PC-9 (cell line): ENCODE measurements at regions of chr9 and their contacts with region 1.

Region 1: GRCh38 chr9:33374634-33375213 is 27.6 kb downstream of the AQP7 start:
- DNase-seq: peak; percentile 61 to 63
- H3K4me3 ChIP-seq: no peak overlapping the region
- H3K27ac ChIP-seq: no peak overlapping the region
- H3K4me1 ChIP-seq: peaks cover 6% of the 10 kb centered on the region; the same call in 1 of the 2 replicates
- H3K27me3 ChIP-seq: no peaks in the 10 kb centered on the region
- CTCF ChIP-seq: peak; percentile 79

Region 2: DNA sequence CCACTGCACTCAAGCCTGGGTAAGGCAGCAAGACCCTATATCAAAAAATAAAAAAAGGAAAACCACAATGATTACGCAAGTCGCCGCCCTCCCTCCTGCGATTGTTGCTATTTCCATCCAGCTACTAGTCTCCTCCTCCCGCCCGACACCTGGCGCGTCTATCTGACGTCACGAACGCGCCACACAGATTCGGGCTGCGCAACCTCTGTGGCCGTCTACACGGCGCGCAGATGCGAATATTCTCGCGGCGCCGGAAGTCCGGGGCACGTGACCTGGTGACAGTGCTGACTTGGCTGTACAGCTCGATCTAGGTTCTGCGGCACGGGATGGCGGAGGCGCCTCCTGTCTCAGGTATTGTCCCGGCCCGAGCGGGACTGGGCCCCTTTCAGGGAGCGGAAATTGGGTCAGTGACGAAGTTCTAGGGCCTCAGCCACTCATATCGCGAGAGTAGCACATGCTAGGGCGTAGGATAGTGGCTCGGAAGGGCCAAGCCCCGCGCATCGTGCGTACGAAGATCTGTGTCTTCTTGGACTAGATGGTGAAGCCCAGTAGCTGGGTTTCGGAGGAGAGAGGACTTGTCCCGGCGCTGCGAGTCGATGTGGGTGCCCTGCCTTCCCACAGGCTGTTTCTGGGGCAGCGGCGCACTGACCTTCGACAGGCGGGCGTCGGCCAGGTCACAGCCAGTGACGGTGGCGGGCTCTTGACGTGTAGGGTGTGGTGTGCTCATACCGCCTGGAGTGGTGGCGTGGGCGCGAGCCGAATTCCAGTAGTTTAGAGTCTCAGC is 84.3 kb before region 1 on chr9 and contains the start of gene NFX1:
- CTCF ChIA-PET with region 1: interaction called, 5 read pairs
- POLR2A ChIA-PET with region 1: interaction called, 6 read pairs
- intact Hi-C with region 1: loop called (anchors 10 kb)
- DNase-seq: peak; percentile 84 to 90
- H3K4me3 ChIP-seq: peak within 1 kb of the TSS; percentile 75
- H3K27ac ChIP-seq: peak within 1 kb of the TSS; percentile 95
- H3K4me1 ChIP-seq: no peaks in the 10 kb centered on the region; the same call in 1 of the 2 replicates
- H3K27me3 ChIP-seq: no peaks in the 10 kb centered on the region
- CTCF ChIP-seq: no peak
- total RNA-seq, gene NFX1: 14.9 and 15.0 TPM in 2 replicates

Region 3: DNA sequence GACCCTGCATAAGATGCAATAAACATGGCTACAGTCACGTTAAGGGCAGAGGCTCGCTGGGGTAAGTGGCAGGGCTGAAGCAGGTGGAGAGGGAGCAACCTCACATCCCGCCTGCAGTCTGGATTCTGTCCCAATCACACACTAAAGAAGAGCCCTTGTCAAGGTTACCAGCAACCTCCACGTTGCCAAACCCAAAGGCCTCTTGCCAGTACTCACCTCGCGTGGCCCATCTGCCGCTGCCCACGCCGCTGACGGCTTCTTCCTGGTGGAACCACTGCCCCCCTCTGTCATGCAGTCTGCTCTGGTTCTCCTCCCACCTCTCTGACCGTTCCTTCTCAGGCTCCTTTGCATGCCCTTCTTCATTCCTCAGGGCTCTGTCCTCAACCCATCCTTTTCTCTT is 18.9 kb after region 1 on chr9:
- CTCF ChIA-PET with region 1: no interaction called
- POLR2A ChIA-PET with region 1: interaction called, 12 read pairs
- intact Hi-C with region 1: no loop called
- DNase-seq: no peak
- H3K4me3 ChIP-seq: no peak overlapping the region
- H3K27ac ChIP-seq: no peak overlapping the region
- H3K4me1 ChIP-seq: peaks cover 12% of the 10 kb centered on the region
- H3K27me3 ChIP-seq: no peaks in the 10 kb centered on the region
- CTCF ChIP-seq: no peak

Region 4: GRCh38 chr9:33446946-33447798 is 72.4 kb after region 1 on chr9 and contains the start of gene AQP3:
- CTCF ChIA-PET with region 1: interaction called, 7 read pairs
- POLR2A ChIA-PET with region 1: no interaction called
- intact Hi-C with region 1: loop called (anchors 2 kb)
- DNase-seq: peak; percentile 47 to 55
- H3K4me3 ChIP-seq: peak within 1 kb of the TSS; percentile 39; the same call in 1 of the 2 replicates
- H3K27ac ChIP-seq: no peak within 1 kb of the TSS
- H3K4me1 ChIP-seq: peaks cover 48% of the 10 kb centered on the region
- H3K27me3 ChIP-seq: no peaks in the 10 kb centered on the region
- CTCF ChIP-seq: no peak
- total RNA-seq, gene AQP3: 9.9 and 15.3 TPM in 2 replicates

Region 5: DNA sequence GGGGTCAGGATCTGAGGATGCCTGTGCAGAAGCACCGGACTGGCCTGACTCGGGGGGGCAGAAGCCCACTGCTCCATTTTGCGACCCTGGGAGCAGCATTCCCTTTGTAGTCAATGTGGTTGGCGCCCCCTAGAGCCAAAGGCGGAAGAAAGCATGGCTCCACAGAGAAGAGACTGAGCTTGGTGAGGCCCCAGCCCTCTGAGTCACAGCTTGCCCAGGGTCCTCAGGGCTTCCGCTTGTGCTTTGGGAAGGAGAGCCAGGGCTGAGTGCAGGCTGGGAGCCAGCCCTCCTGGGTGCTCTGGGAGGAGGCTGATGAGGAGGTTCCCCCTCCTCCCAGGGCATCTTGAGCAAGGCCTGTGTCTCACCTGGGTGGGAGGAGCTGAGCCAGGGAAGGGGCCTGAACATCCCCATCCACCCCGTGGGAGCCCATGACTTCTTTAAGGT is 78.1 kb after region 1 on chr9:
- CTCF ChIA-PET with region 1: interaction called, 13 read pairs
- POLR2A ChIA-PET with region 1: no interaction called
- intact Hi-C with region 1: no loop called
- DNase-seq: peak; percentile 72 to 85
- H3K4me3 ChIP-seq: no peak overlapping the region
- H3K27ac ChIP-seq: peak overlapping the region; percentile 44
- H3K4me1 ChIP-seq: peaks cover 25% of the 10 kb centered on the region
- H3K27me3 ChIP-seq: no peaks in the 10 kb centered on the region
- CTCF ChIP-seq: peak; percentile 86

Region 6: GRCh38 chr9:33466565-33467495 is 92.1 kb after region 1 on chr9:
- CTCF ChIA-PET with region 1: interaction called, 3 read pairs
- POLR2A ChIA-PET with region 1: no interaction called
- intact Hi-C with region 1: loop called (anchors 1 kb)
- DNase-seq: peak; percentile 36 to 68
- H3K4me3 ChIP-seq: no peak overlapping the region
- H3K27ac ChIP-seq: no peak overlapping the region
- H3K4me1 ChIP-seq: no peaks in the 10 kb centered on the region
- H3K27me3 ChIP-seq: no peaks in the 10 kb centered on the region
- CTCF ChIP-seq: peak; percentile 92

Region 7: GRCh38 chr9:33719581-33720374 is 345.1 kb after region 1 on chr9:
- CTCF ChIA-PET with region 1: no interaction called
- POLR2A ChIA-PET with region 1: no interaction called
- intact Hi-C with region 1: no loop called
- DNase-seq: peak in 1 of 2 experiments; percentile 19
- H3K4me3 ChIP-seq: no peak overlapping the region
- H3K27ac ChIP-seq: no peak overlapping the region
- H3K4me1 ChIP-seq: no peaks in the 10 kb centered on the region; the same call in 1 of the 2 replicates
- H3K27me3 ChIP-seq: no peaks in the 10 kb centered on the region
- CTCF ChIP-seq: peak; percentile 54